B cell (primary cell): ENCODE measurements at regions of chr12 and their contacts with region 1.

Region 1: GRCh38 chr12:40921563-40922163 is 229.4 kb downstream of the CNTN1 start:
- DNase-seq: peak; percentile 12
- ATAC-seq: no peak
- H3K4me3 ChIP-seq: no peak overlapping the region
- H3K4me3 Mint-ChIP-seq: no peak overlapping the region
- H3K27ac ChIP-seq: no peak overlapping the region
- H3K27ac Mint-ChIP-seq: no peak overlapping the region
- H3K4me1 ChIP-seq: no peaks in the 10 kb centered on the region
- H3K4me1 Mint-ChIP-seq: no peaks in the 10 kb centered on the region
- H3K27me3 ChIP-seq: no peaks in the 10 kb centered on the region
- H3K27me3 Mint-ChIP-seq: peaks cover 7% of the 10 kb centered on the region
- CTCF ChIP-seq: peak; percentile 82

Region 2: GRCh38 chr12:40622246-40622838 is 299.3 kb before region 1 on chr12:
- CTCF ChIA-PET with region 1: interaction called, 3 read pairs
- POLR2A ChIA-PET with region 1: no interaction called
- intact Hi-C with region 1: loop called (anchors 2 kb)
- DNase-seq: peak; percentile 35
- ATAC-seq: no peak
- H3K4me3 ChIP-seq: no peak overlapping the region
- H3K4me3 Mint-ChIP-seq: no peak overlapping the region
- H3K27ac ChIP-seq: no peak overlapping the region
- H3K27ac Mint-ChIP-seq: no peak overlapping the region
- H3K4me1 ChIP-seq: no peaks in the 10 kb centered on the region
- H3K4me1 Mint-ChIP-seq: no peaks in the 10 kb centered on the region
- H3K27me3 ChIP-seq: no peaks in the 10 kb centered on the region
- H3K27me3 Mint-ChIP-seq: peaks cover 10% of the 10 kb centered on the region
- CTCF ChIP-seq: peak; percentile 81

Region 3: DNA sequence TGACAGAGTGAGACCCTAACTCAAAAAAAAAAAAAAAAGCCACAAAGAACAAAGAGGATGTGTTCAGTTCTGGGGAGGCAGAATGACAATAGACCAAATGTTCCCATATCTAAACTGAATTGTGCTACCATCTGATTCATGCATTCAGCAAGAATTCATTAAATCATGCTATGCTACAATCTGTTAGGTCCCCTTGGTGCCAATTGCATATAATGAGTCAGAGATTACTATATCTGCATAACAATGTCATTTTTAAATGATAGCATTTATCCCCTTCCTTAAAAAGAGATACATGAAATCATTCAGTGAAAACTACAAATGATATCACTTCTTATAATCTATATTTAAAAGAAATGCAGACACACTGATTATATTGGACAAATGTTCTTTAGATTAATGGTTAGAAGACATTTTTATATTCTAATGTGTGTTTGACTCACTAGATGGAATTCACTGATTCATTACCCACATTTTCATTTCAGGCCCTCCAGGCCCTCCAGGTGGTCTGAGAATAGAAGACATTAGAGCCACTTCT is 58.8 kb after region 1 on chr12:
- CTCF ChIA-PET with region 1: no interaction called
- POLR2A ChIA-PET with region 1: no interaction called
- intact Hi-C with region 1: no loop called
- DNase-seq: no peak
- ATAC-seq: no peak
- H3K4me3 ChIP-seq: no peak overlapping the region
- H3K4me3 Mint-ChIP-seq: no peak overlapping the region
- H3K27ac ChIP-seq: no peak overlapping the region
- H3K27ac Mint-ChIP-seq: no peak overlapping the region
- H3K4me1 ChIP-seq: no peaks in the 10 kb centered on the region
- H3K4me1 Mint-ChIP-seq: no peaks in the 10 kb centered on the region
- H3K27me3 ChIP-seq: no peaks in the 10 kb centered on the region
- H3K27me3 Mint-ChIP-seq: no peaks in the 10 kb centered on the region
- CTCF ChIP-seq: no peak